ENCODE measurements at regions of chr1 and their contacts with region 1.

Region 1: DNA sequence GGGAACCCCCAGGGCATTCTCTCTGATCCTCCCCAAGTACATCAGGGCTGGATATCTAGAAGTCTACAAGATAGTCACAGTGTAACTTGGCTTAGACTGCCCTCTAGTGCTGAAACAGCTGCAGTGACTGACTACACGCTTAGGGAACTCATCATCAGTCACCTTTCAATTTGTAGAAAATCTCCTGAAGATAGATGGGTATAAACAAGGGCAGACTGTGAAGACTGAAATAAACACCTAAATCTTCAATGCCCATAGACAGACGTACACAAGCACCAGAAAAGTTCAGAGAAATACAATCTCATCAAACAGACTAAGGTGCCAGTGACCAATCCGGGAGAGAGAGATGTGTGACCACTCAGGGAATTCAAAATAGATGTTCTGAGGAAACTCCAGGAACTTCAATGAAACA is 46.6 kb downstream of the PACC1 start:
- DNase-seq: peak; percentile 48
- H3K4me3 Mint-ChIP-seq: no peak overlapping the region
- H3K27ac Mint-ChIP-seq: no peak overlapping the region
- H3K4me1 Mint-ChIP-seq: no peaks in the 10 kb centered on the region
- H3K27me3 Mint-ChIP-seq: no peaks in the 10 kb centered on the region

Region 2: GRCh38 chr1:212012034-212012740 is 355.9 kb before region 1 on chr1:
- intact Hi-C with region 1: loop called (anchors 1 kb)
- DNase-seq: peak; percentile 45
- H3K4me3 Mint-ChIP-seq: no peak overlapping the region
- H3K27ac Mint-ChIP-seq: no peak overlapping the region
- H3K4me1 Mint-ChIP-seq: peaks cover 5% of the 10 kb centered on the region
- H3K27me3 Mint-ChIP-seq: no peaks in the 10 kb centered on the region

Region 3: DNA sequence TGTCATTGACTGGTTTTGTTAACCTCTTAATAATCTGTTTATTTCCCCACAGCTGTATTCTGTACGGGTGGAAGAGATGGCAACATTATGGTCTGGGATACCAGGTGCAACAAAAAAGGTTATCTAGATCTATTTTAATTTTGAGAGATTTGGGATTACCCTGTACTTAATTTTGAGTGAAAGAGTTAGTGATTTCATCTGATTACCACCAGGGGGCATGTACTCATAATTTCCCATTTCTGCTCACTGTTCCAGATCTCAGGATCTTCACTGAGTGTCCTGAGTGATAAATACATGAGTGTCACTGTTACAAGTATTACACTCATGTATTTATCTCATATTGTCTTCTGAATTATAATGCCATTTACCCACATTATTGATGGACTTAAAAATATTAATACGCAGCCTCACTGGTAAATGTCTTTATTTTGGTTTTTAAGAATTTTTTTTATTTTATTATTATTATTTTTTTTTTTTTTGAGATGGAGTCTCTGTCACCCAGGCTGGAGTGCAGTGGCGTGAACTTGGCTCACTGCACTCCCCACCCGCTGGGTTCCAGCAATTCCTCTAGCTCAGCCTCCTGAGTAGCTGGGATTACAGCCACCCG is 305.1 kb before region 1 on chr1:
- intact Hi-C with region 1: loop called (anchors 1 kb)
- DNase-seq: no peak
- H3K4me3 Mint-ChIP-seq: no peak overlapping the region
- H3K27ac Mint-ChIP-seq: no peak overlapping the region
- H3K4me1 Mint-ChIP-seq: no peaks in the 10 kb centered on the region
- H3K27me3 Mint-ChIP-seq: no peaks in the 10 kb centered on the region

Region 4: GRCh38 chr1:212794561-212795014 is 426.5 kb after region 1 on chr1:
- intact Hi-C with region 1: no loop called
- DNase-seq: no peak
- H3K4me3 Mint-ChIP-seq: peak overlapping the region; percentile 16
- H3K27ac Mint-ChIP-seq: peak overlapping the region; percentile 82
- H3K4me1 Mint-ChIP-seq: peaks cover 23% of the 10 kb centered on the region
- H3K27me3 Mint-ChIP-seq: no peaks in the 10 kb centered on the region